Body of pancreas (tissue), 4 donors: ENCODE measurements at regions of chr3 and their contacts with region 1.

Region 1: DNA sequence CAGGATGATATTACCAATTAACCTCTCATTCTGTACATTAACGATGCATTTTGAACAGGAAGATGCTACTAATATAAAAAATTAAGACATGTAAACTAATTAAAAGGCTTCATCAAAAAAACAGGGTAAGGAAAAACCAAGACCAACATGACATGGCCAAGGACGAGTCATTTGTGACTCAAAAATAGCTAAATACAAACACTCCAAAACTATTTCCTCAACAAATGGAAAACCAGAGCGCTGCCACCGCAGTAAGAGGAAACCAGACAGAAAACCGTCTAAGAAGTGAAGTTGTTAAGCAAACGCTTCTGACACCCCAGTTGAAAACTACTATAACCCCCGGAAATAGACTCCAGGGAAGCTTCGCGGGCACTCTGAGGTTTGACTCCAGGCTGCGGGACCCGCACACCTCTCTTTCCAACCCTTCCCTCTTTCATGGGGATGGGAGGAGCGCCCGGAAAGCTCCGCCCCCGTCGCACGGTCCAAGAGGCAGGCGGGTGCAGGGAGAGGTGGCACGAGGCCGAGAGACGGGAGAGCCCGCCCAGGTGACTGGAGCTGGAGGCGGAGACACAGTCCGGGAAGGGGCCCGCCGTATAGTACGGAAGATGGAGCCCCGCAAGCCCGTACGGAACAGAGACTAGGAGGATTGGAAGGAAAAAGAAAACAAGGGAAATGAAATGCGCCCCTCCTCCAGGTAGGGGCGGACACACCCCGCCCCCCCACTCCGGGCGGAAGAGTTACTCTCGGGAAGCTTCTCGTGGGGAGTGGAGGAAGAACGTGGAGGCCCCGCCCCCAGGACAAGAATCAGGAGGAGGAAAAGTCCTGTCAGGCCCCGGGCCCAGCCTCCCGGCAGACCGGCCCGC is 708 bp downstream of the DCAF1 start:
- DNase-seq: peak; percentile 96 to 99 (median 96)
- ATAC-seq: peak; percentile 82
- H3K4me3 ChIP-seq: peak overlapping the region; percentile 64 to 74
- H3K27ac ChIP-seq: peak overlapping the region; percentile 80 to 100 (median 99)
- H3K4me1 ChIP-seq: peaks cover 4% of the 10 kb centered on the region
- H3K27me3 ChIP-seq: no peaks in the 10 kb centered on the region
- CTCF ChIP-seq: no peak
- POLR2A ChIP-seq: peak in 2 of 3 donors; percentile 85 to 87

Region 2: DNA sequence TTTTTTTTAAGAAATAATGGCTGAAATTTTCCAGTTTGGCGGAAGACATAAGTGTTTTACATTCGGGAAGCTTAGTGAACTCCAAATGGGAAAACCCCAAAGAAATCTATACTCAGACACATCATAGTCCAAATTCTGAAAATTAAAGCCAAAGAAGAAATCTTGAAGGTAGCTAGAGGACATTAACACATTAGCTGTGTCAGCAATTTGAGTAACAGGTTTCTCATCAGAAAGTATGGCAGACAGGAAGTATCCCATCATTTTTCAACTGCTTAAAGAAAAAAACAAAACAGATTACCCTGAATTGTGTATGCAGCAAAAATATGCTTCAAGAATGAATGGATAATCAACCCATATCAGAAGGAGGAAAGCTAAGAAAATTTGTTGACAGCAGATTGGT is 562.7 kb before region 1 on chr3:
- intact Hi-C with region 1: no loop called
- DNase-seq: no peak
- ATAC-seq: no peak
- H3K4me3 ChIP-seq: no peak overlapping the region
- H3K27ac ChIP-seq: no peak overlapping the region
- H3K4me1 ChIP-seq: no peaks in the 10 kb centered on the region
- H3K27me3 ChIP-seq: no peaks in the 10 kb centered on the region
- CTCF ChIP-seq: no peak
- POLR2A ChIP-seq: no peak

Region 3: DNA sequence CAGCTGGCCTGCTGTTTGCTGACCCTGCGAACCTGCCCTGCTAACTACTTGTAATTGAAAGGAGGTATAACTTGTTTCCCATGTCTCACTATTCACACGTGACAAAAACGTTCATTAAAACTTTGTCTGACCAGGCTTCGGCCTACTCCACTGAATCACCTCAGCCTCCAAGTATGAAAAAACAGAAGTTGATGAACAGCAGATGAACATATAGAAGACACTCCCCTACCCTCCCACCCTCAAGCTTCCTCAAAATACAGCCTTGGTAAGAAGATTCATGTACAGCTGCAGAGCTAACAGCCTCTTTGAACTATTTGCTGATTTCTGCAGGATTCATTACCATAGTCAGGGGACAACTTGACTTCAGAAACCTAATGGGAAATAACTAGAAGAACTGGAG is 97.4 kb before region 1 on chr3:
- intact Hi-C with region 1: loop called (anchors 10 kb)
- DNase-seq: peak in 1 of 4 donors; percentile 35
- ATAC-seq: no peak
- H3K4me3 ChIP-seq: no peak overlapping the region
- H3K27ac ChIP-seq: no peak overlapping the region
- H3K4me1 ChIP-seq: no peaks in the 10 kb centered on the region
- H3K27me3 ChIP-seq: no peaks in the 10 kb centered on the region
- CTCF ChIP-seq: no peak
- POLR2A ChIP-seq: no peak

Region 4: GRCh38 chr3:51429138-51429537 is 70.0 kb before region 1 on chr3:
- intact Hi-C with region 1: no loop called
- DNase-seq: no peak
- ATAC-seq: no peak
- H3K4me3 ChIP-seq: no peak overlapping the region
- H3K27ac ChIP-seq: no peak overlapping the region
- H3K4me1 ChIP-seq: no peaks in the 10 kb centered on the region
- H3K27me3 ChIP-seq: no peaks in the 10 kb centered on the region
- CTCF ChIP-seq: no peak
- POLR2A ChIP-seq: no peak

Region 5: GRCh38 chr3:52253314-52254304 is 754.5 kb after region 1 on chr3:
- intact Hi-C with region 1: no loop called
- DNase-seq: peak in 1 of 4 donors; percentile 75
- ATAC-seq: peak; percentile 38
- H3K4me3 ChIP-seq: no peak overlapping the region
- H3K27ac ChIP-seq: peak overlapping the region in 2 of 4 donors; percentile 29 to 61
- H3K4me1 ChIP-seq: no peaks in the 10 kb centered on the region
- H3K27me3 ChIP-seq: no peaks in the 10 kb centered on the region
- CTCF ChIP-seq: no peak
- POLR2A ChIP-seq: no peak

Region 6: DNA sequence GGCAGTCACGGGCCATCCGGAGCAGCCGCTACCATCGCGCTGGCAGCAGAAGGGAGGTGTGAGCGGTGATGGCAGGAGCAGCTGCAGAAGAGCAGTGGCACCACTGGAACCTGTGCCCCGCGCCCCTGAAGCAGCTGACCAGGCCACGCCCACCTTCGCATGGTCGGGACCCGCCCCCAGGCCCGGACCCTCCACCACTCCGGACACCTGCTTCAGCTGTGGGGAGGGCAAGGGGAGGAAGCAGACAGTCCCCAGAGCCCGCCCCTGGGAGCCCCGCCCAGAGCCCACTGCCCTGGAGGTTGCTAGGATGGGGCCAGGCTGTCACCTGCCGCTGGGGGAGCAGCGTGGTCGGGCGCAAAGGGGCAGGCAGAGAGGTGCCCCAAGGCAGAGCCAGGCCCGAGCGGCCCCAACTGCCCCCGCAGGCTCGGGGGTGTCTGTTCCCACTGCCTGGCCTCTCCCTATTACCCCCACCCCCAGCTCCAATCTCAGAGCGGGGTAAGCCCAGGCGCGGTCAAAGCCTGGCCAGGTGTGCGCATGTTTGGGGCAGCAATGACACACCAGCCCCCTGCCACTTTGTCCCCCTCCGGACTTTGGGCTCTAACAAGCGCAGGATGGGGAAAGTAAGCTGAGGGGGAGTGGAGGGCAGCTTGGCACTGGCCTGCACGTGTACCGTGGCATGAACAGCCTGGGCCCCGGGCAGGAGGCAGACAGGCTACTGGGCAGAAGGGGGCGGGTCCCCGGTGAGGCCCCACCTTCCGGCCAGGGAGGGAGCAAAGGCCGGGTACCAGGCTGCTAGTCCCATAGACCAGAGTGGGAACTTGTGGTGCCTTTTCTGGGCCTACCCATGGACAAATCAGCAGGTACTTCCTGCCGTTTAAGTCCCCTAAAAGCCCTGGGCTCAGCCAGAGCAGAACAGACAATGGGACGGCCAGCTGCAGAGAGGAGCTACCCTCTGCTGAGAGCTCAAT is 1215.5 kb after region 1 on chr3:
- intact Hi-C with region 1: no loop called
- DNase-seq: peak in 2 of 4 donors; percentile 20 to 54
- ATAC-seq: peak; percentile 30
- H3K4me3 ChIP-seq: no peak overlapping the region
- H3K27ac ChIP-seq: no peak overlapping the region
- H3K4me1 ChIP-seq: no peaks in the 10 kb centered on the region
- H3K27me3 ChIP-seq: no peaks in the 10 kb centered on the region
- CTCF ChIP-seq: no peak
- POLR2A ChIP-seq: no peak